ENCODE measurements at regions of chr10 and their contacts with region 1.

Region 1: DNA sequence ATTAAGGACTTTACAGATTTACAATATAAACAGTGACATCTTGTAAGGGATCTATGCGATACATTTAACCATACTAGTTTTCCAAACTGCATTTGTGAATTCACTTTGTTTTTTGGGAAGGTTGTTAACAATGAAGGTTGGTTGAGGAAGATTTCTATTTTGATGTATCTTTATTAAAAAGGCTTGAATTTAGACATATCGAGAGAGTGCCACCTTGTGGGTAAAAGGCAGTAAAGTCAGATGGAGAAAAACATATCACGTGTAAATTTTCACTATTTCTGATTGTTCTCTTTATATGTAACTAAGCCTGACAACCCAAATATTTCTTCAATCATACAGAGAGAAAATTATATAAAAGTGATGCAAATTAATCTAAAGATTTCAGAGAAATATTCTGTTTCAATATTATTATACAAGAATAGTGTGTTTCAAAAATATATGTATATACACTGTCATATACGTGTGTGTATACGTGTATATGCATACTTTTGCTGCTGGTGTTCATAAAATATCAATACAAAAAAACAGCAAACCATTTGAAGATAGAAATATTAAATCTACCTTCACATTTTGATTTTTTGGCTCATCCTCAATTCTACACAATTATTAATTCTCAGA is 988.6 kb downstream of the SORCS1 start:
- DNase-seq: no peak
- ATAC-seq: no peak
- H3K4me3 ChIP-seq: no peak overlapping the region
- H3K27ac ChIP-seq: no peak overlapping the region
- H3K4me1 ChIP-seq: no peaks in the 10 kb centered on the region
- H3K27me3 ChIP-seq: no peaks in the 10 kb centered on the region
- CTCF ChIP-seq: peak in 11 of 12 donors; percentile 16 to 59 (median 35)
- POLR2A ChIP-seq: no peak

Region 2: GRCh38 chr10:106278383-106278782 is 102.5 kb after region 1 on chr10:
- intact Hi-C with region 1: loop called in 1 of 10 experiments (anchors 10 kb)
- DNase-seq: no peak
- ATAC-seq: peak in 1 of 4 donors; percentile 32
- H3K4me3 ChIP-seq: no peak overlapping the region
- H3K27ac ChIP-seq: no peak overlapping the region
- H3K4me1 ChIP-seq: no peaks in the 10 kb centered on the region
- H3K27me3 ChIP-seq: no peaks in the 10 kb centered on the region
- CTCF ChIP-seq: peak in 2 of 12 donors; percentile 12 to 23
- POLR2A ChIP-seq: no peak